Prostate gland (tissue), 2 donors: ENCODE measurements at regions of chr3 and their contacts with region 1.

Region 1: GRCh38 chr3:102536456-102536855 is 101.6 kb downstream of the ZPLD1 start:
- DNase-seq: peak; percentile 4
- H3K4me3 ChIP-seq: no peak overlapping the region
- H3K27ac ChIP-seq: no peak overlapping the region
- H3K4me1 ChIP-seq: no peaks in the 10 kb centered on the region
- H3K27me3 ChIP-seq: no peaks in the 10 kb centered on the region
- CTCF ChIP-seq: peak in 3 of 4 experiments; percentile 28 to 52 (median 46)
- POLR2A ChIP-seq: no peak

Region 2: GRCh38 chr3:102235679-102236078 is 300.8 kb before region 1 on chr3:
- intact Hi-C with region 1: loop called (anchors 2 kb)
- DNase-seq: no peak
- H3K4me3 ChIP-seq: no peak overlapping the region
- H3K27ac ChIP-seq: no peak overlapping the region
- H3K4me1 ChIP-seq: no peaks in the 10 kb centered on the region
- H3K27me3 ChIP-seq: no peaks in the 10 kb centered on the region
- CTCF ChIP-seq: peak in 2 of 4 experiments; percentile 40 to 69
- POLR2A ChIP-seq: no peak

Region 3: GRCh38 chr3:102324436-102324835 is 212.0 kb before region 1 on chr3:
- intact Hi-C with region 1: no loop called
- DNase-seq: no peak
- H3K4me3 ChIP-seq: no peak overlapping the region
- H3K27ac ChIP-seq: no peak overlapping the region
- H3K4me1 ChIP-seq: no peaks in the 10 kb centered on the region
- H3K27me3 ChIP-seq: no peaks in the 10 kb centered on the region
- CTCF ChIP-seq: no peak
- POLR2A ChIP-seq: no peak

Region 4: DNA sequence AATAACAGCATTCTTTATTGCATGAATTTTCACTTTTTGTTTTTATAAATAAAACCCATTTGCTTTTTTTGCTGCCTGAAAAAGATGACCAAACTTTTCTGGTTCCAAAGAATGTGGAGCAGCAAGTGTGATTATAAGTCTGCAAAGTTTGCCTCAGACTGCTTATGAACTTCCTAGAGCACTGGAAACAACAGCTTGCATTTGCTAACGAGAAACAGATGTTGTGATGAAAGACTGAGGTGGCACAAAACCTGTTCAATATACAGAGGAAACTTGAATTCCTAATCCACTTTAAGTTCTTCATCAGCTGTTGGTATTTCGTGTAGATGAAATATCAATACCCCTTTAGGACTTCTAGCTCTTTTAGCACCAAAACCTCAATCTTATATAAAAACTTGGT is 92.4 kb before region 1 on chr3:
- intact Hi-C with region 1: no loop called
- DNase-seq: no peak
- H3K4me3 ChIP-seq: no peak overlapping the region
- H3K27ac ChIP-seq: no peak overlapping the region
- H3K4me1 ChIP-seq: no peaks in the 10 kb centered on the region
- H3K27me3 ChIP-seq: no peaks in the 10 kb centered on the region
- CTCF ChIP-seq: no peak
- POLR2A ChIP-seq: no peak